ENCODE measurements at regions of chr4 and their contacts with region 1.

Region 1: DNA sequence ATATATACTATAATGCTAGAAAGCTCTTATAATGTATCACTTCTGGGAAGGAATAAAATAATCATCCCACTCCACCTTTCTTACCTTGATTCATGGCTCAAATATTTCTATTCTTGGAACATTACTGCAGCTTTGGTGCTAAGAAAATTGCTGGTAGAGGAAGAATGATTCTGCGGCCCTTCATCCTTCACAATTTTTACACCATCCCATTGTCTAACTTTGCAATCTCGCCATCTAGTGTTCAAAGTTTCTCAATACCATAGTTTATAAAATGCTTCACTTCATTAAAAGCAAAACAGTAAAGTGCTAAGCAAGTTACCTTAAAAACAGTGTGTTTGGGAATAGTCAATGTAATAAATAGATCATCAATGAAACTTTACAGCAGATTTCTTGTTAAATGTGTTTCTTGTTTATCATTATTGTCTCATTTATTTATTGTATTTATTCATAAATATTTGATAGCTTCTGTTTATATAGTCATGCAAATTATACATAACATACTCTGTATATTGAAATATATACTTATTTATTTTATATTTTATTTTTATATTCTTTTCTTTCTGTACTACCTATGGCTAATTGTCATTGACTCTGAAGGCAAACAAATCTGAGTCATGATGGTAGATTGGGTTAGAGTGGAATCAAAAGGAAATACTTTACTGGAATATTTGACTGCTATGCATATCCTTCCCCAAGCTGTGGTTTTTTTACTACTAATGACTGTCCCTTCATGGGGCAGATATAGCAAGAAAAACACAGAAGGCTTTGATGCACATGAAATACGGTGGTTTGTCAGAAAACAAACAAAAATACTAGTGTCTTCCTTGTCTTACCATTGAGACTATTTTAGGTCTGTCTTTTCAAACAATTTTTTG is 390.7 kb downstream of the MAPK10 start:
- DNase-seq: no peak
- H3K4me3 ChIP-seq: no peak overlapping the region
- H3K27ac ChIP-seq: no peak overlapping the region
- H3K4me1 ChIP-seq: no peaks in the 10 kb centered on the region
- H3K27me3 ChIP-seq: no peaks in the 10 kb centered on the region
- CTCF ChIP-seq: peak in 3 of 4 experiments; percentile 55 to 62 (median 58)
- POLR2A ChIP-seq: no peak

Region 2: GRCh38 chr4:85756938-85757337 is 212.2 kb before region 1 on chr4:
- intact Hi-C with region 1: loop called (anchors 5 kb)
- DNase-seq: no peak
- H3K4me3 ChIP-seq: no peak overlapping the region
- H3K27ac ChIP-seq: no peak overlapping the region
- H3K4me1 ChIP-seq: no peaks in the 10 kb centered on the region
- H3K27me3 ChIP-seq: no peaks in the 10 kb centered on the region
- CTCF ChIP-seq: peak in 2 of 4 experiments; percentile 24 to 32
- POLR2A ChIP-seq: no peak

Region 3: DNA sequence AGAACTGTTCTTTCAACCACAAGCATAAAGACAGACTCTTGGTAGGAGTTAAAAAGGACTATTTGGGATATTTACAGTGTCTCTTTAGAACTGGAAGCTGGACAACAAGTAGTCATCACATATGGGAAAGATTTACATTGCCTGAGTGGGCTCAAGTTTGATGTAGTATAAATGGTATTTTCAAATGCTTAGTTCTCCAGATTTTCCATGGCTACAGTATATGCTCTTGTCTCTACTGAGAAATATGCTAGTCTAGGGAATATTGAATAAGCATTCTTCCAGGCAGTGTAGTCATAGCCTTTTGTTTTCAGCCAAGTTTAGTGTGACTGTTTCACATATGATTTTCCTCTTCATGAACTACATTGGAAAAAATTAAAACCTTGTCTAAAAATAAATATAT is 178.6 kb before region 1 on chr4:
- intact Hi-C with region 1: loop called (anchors 10 kb)
- DNase-seq: no peak
- H3K4me3 ChIP-seq: no peak overlapping the region
- H3K27ac ChIP-seq: no peak overlapping the region
- H3K4me1 ChIP-seq: no peaks in the 10 kb centered on the region
- H3K27me3 ChIP-seq: no peaks in the 10 kb centered on the region
- CTCF ChIP-seq: no peak
- POLR2A ChIP-seq: no peak